AG04450 (cell line): ENCODE measurements at regions of chr1 and their contacts with region 1.

Region 1: DNA sequence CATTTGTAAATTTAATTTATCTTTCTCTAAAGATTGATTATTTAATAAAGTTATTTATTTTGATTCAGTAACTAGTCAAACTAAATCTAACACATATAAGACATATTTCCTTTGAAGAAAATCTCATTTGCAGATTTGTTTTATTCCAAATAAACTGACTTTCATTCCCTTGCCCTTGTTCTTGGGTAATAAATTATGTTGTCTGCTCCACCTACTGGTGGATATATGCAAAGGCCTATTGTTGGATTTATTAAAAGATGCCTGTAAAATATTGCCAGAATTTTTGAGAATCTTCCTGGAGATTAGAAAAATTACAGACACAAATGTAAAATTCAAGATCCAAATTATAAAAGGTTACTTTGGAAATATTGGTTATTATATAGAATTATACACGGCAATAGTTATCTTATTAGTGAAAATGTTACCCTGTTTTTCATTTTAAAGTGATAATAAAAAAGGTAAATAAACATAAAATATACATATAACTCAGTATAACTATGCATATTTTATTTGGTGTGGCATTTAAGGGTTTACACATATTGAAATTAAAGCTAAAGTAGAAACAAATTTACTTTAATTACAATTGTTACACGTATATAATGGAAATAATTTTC is 116.1 kb downstream of the SPATA17 start:
- DNase-seq: peak; percentile 6
- H3K4me3 ChIP-seq: no peak overlapping the region
- H3K27ac ChIP-seq: no peak overlapping the region
- H3K27me3 ChIP-seq: no peaks in the 10 kb centered on the region
- CTCF ChIP-seq: peak; percentile 78

Region 2: GRCh38 chr1:216750012-216750627 is 997.1 kb before region 1 on chr1:
- CTCF ChIA-PET with region 1: interaction called, 14 read pairs
- POLR2A ChIA-PET with region 1: no interaction called
- DNase-seq: peak; percentile 11
- H3K4me3 ChIP-seq: no peak overlapping the region
- H3K27ac ChIP-seq: no peak overlapping the region
- H3K27me3 ChIP-seq: no peaks in the 10 kb centered on the region
- CTCF ChIP-seq: peak; percentile 78

Region 3: GRCh38 chr1:217393896-217394295 is 353.4 kb before region 1 on chr1:
- CTCF ChIA-PET with region 1: no interaction called
- POLR2A ChIA-PET with region 1: no interaction called
- DNase-seq: no peak
- H3K4me3 ChIP-seq: no peak overlapping the region
- H3K27ac ChIP-seq: no peak overlapping the region
- H3K27me3 ChIP-seq: no peaks in the 10 kb centered on the region
- CTCF ChIP-seq: no peak

Region 4: GRCh38 chr1:218079347-218079746 is 332.1 kb after region 1 on chr1:
- CTCF ChIA-PET with region 1: no interaction called
- POLR2A ChIA-PET with region 1: no interaction called
- DNase-seq: no peak
- H3K4me3 ChIP-seq: no peak overlapping the region
- H3K27ac ChIP-seq: no peak overlapping the region
- H3K27me3 ChIP-seq: no peaks in the 10 kb centered on the region
- CTCF ChIP-seq: no peak